ENCODE measurements at regions of chr1 and their contacts with region 1.

Region 1: DNA sequence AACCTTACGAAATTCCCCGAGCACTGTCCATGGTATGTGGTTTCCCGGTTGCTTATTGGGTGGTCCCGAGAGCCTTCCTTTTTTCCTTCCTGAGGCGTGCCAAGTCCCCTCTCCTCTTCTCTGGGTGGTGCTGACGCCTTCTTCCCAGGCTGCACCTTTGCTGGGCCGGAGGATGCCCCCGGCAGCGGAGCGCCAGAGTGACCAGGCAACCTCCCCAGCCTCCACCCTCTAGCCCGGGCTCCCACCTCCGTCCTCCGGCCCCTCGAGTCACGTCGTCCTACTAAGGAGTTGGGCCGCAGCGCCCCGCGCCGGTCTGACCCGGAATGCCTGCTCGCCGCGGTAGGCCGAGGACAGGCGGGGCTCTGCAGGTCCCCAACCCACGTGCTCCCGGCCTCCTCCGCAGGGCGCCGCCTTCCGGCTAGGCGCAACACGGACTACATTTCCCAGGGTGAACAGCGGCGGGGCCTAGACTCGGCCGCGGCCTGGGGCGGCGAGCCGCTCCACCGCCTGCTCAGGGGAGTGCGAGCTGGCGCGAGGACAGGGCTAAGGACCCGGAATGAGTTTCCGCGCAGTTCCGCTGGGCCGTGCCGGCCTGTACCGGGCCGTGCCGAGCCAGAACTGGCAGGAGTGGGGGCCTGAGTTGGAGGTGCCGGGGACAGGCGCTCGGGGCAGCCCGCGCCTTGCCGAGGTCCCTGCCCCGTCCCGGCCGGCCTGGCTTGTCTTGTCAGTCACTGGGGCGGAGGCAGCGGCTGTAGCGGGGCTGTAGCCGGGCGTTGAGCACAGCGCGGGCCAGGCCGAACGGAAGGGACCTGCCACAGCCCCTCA is at the start of gene IPO13:
- DNase-seq: peak; percentile 97
- H3K4me3 ChIP-seq: peak within 1 kb of the TSS; percentile 53 to 78 (median 72)
- H3K27ac ChIP-seq: peak within 1 kb of the TSS; percentile 90 to 96 (median 93)
- H3K4me1 ChIP-seq: peaks cover 0 to 45% (median 37%) of the 10 kb centered on the region in 4 donors
- H3K27me3 ChIP-seq: no peaks in the 10 kb centered on the region
- CTCF ChIP-seq: peak; percentile 40 to 74 (median 68)
- EP300 ChIP-seq: no peak
- POLR2A ChIP-seq: peak; percentile 62 to 68
- total RNA-seq, gene IPO13: 16.1 to 27.1 (median 22.3) TPM

Region 2: DNA sequence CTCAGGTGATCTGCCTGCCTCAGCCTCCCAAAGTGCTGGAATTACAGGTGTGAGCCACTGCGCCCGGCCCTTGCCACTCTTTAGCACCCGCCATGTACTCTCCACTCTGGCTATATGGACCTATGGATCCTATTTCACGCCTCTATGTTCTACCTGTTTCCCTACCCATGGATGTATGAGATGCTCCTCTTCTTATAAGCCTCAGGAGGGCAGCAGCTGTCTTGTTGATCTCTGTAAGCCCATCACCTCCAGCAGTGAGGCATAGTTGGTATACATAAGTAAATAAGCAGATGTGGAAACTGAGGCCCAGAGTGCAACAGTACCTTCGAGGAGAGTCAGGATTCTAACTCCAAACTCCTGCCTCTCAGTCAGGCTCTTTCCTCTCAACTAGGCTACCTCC is 37.6 kb before region 1 on chr1:
- intact Hi-C with region 1: no loop called
- DNase-seq: peak; percentile 13
- H3K4me3 ChIP-seq: no peak overlapping the region
- H3K27ac ChIP-seq: no peak overlapping the region
- H3K4me1 ChIP-seq: peaks cover 0 to 18% (median 18%) of the 10 kb centered on the region in 4 donors
- H3K27me3 ChIP-seq: no peaks in the 10 kb centered on the region
- CTCF ChIP-seq: no peak
- EP300 ChIP-seq: no peak
- POLR2A ChIP-seq: no peak

Region 3: DNA sequence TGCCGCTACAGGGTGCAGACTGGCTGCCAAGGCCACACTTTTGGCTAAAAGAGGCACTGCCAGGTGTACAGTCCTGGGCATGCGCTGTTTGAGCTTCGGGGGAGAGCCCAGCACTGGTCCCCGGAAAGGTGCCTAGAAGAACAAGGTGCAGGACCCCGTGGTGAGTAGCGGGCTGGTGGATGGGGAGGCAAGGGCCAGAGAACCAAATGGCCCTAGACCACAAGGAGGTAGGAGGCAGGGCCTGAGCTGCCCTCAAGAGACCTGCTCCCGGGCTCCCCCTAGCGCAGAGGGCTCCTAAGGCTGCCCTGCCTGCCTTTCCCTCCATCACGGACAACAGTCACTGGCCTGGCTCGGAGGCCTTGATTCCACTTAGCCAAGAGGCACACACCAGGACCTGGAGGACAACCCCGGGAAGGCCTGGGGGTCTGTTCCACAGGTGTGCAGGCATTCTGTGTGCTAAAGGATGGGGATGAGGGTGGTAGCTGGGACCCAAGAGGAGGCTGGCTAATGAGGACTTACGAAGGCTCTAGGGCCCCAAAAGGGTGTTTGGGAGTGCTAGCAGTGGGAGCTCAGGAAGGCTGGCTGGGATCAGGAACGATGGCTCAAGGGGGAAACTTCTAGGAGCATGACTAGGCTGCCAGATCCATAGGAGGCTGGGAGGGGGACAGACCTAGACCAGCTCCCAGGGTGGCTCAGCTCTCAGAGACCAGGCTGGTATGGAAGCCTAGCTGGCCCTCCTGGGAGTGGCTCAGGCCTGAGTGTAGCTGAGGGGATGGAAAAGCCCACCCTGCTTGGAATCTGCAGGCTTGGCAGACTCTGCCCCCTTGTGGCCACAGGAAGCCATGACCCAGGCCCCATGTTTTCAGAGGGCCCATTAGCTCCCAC is 12.1 kb before region 1 on chr1:
- intact Hi-C with region 1: no loop called
- DNase-seq: peak; percentile 83
- H3K4me3 ChIP-seq: peak overlapping the region in 3 of 4 donors; percentile 34 to 45 (median 43)
- H3K27ac ChIP-seq: peak overlapping the region in 1 of 4 donors; percentile 17
- H3K4me1 ChIP-seq: peaks cover 0 to 41% (median 36%) of the 10 kb centered on the region in 4 donors
- H3K27me3 ChIP-seq: peaks cover 0 to 17% (median 0%) of the 10 kb centered on the region in 3 donors
- CTCF ChIP-seq: peak; percentile 84 to 96 (median 90)
- EP300 ChIP-seq: no peak
- POLR2A ChIP-seq: no peak

Region 4: GRCh38 chr1:43969746-43970466 is 23.5 kb after region 1 on chr1 and contains the start of gene DPH2:
- intact Hi-C with region 1: loop called (anchors 1 kb)
- DNase-seq: peak; percentile 99
- H3K4me3 ChIP-seq: peak within 1 kb of the TSS; percentile 63 to 90 (median 66)
- H3K27ac ChIP-seq: peak within 1 kb of the TSS; percentile 17 to 60 (median 37)
- H3K4me1 ChIP-seq: peaks cover 0 to 27% (median 14%) of the 10 kb centered on the region in 4 donors
- H3K27me3 ChIP-seq: no peaks in the 10 kb centered on the region
- CTCF ChIP-seq: peak in 1 of 4 experiments; percentile 23
- EP300 ChIP-seq: no peak
- POLR2A ChIP-seq: no peak
- total RNA-seq, gene DPH2: 10.7 to 37.2 (median 12.8) TPM

Region 5: DNA sequence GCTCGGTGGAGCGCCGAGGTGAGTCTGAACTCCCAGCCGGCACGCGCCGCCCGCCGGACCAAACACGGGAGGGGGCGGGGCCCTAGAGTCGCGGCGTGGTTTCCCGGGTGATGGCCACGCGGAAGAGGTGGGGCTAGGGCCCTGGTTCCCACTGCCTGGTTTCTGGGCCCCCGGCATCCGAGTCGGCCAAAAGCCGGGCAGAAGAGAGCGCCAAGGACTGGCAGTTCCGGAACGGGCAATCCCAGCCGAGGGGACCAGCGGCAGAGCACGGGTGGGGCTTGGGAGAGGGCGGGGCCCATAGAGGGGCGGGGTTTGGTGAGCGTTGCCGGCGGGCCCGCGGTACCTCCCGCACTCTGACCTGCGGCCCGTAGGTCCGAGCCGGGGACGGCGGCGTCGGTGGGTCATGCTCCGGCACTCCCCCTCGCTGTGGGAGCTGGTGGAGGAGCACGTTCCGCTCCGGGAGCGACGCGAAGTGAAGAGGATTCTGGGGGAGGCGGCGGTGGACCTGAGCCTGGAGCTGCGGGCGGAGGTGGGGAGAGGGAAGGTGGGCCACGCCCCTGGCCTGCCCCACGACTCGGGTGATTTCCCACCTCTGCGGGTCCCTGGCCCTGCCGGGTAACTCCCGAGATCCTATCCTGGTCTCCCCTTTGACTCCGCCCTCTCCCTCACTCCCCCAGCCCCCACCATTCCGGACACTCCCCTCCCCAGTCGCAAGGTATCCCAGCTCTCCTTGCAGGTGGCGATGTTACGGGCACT is 45.2 kb after region 1 on chr1 and contains the start of gene CCDC24:
- intact Hi-C with region 1: loop called (anchors 5 kb)
- DNase-seq: peak; percentile 93
- H3K4me3 ChIP-seq: peak within 1 kb of the TSS; percentile 47 to 77 (median 56)
- H3K27ac ChIP-seq: peak within 1 kb of the TSS; percentile 68 to 84 (median 79)
- H3K4me1 ChIP-seq: peaks cover 0 to 18% (median 14%) of the 10 kb centered on the region in 4 donors
- H3K27me3 ChIP-seq: no peaks in the 10 kb centered on the region
- CTCF ChIP-seq: no peak
- EP300 ChIP-seq: no peak
- POLR2A ChIP-seq: no peak
- total RNA-seq, gene CCDC24: 2.7 to 6.6 (median 3.9) TPM

Region 6: DNA sequence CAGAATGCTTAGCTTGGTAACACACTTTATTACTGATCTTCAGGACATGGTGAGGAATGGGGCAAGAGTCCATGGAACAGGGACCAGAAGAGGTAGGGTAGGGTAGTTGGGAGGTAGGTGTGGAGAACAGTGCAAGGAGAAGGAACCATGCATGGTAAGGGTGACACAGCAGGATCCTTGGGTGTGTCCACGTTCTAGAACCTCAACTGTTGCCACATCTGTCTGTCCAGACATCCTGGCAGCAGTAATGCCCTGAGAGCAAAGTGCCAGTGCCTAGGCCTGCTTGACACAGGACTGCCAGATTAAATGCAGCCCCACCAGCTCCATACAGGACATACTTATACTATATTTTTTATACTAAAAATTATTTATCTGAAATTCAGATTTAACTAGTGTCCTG is 280.8 kb after region 1 on chr1:
- intact Hi-C with region 1: no loop called
- DNase-seq: peak; percentile 55
- H3K4me3 ChIP-seq: no peak overlapping the region
- H3K27ac ChIP-seq: no peak overlapping the region
- H3K4me1 ChIP-seq: peaks cover 0 to 12% (median 6%) of the 10 kb centered on the region in 4 donors
- H3K27me3 ChIP-seq: no peaks in the 10 kb centered on the region
- CTCF ChIP-seq: no peak
- EP300 ChIP-seq: no peak
- POLR2A ChIP-seq: no peak